Activated CD4-positive, alpha-beta memory T cell treated with anti-CD3 and anti-CD28 coated beads for 36 hours (primary cell): ENCODE measurements at regions of chr4 and their contacts with region 1.

Region 1: DNA sequence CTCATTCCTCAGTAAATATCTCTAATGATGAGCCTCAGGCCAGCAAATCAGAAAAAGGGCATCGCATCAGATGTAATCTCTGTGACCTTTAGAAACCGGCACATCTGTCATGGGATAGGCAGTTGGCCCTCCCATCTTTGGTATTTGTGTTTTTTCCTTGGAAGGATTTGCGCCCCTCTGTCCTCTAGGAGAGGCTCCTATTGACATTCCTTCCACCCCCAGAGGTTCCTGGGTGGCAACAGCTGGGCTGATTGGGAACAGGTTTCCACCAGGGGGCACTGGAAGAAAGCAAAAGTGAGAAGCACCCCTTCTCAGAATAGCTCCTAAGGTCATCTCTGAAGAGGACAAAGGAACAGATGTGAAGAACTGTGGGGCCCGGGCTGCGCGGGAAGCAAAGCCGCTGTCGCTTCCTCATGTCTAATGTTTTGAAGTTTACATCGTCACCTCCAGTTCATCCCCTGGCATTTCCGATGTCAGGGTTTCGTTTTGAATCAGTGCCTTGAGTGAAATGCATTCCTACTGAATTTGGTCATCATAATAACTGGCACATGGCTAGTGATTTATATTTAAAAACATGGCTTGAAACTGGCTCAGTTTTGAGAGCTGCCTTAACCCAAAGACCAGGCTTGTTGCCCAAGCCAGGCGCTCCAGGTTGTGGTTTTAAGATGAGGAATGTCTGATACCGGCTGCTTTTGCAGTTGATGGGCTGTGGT is 6.2 kb downstream of the TXK start:
- DNase-seq: peak; percentile 93
- H3K4me3 Mint-ChIP-seq: peak overlapping the region; percentile 63
- H3K27ac Mint-ChIP-seq: peak overlapping the region; percentile 95
- H3K4me1 Mint-ChIP-seq: peaks cover 89% of the 10 kb centered on the region
- H3K27me3 Mint-ChIP-seq: no peaks in the 10 kb centered on the region

Region 2: DNA sequence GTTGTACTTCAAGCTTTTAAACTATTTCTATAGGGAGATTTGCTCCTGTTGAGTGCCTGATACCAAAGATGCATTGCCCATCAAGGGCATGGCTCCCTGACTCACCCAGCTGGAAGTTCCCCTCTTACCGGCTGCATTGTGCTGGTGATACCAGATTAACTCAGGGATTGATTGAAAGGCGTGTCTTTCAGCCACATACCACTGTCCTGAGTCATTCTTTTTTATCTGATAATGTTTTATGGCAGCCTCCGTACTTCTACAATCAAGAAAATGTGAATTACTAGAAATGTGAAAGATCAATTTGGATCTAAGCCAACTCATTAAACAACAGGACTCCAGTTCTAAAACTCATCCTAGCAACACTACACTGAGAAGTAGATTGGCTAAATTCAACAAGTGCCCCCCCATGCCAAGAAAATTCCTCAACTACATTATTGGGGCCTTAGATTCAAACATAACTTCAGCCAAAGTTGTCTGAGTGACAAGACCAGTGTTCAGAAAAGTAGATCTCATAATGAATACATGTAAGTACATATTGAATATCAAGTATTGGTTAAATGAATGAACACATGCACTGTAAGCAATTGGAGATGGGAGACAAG is 33.8 kb before region 1 on chr4:
- CTCF ChIA-PET with region 1: interaction called, 6 read pairs
- POLR2A ChIA-PET with region 1: no interaction called
- intact Hi-C with region 1: loop called (anchors 5 kb)
- DNase-seq: peak; percentile 75
- H3K4me3 Mint-ChIP-seq: no peak overlapping the region
- H3K27ac Mint-ChIP-seq: peak overlapping the region; percentile 65
- H3K4me1 Mint-ChIP-seq: peaks cover 16% of the 10 kb centered on the region
- H3K27me3 Mint-ChIP-seq: no peaks in the 10 kb centered on the region

Region 3: DNA sequence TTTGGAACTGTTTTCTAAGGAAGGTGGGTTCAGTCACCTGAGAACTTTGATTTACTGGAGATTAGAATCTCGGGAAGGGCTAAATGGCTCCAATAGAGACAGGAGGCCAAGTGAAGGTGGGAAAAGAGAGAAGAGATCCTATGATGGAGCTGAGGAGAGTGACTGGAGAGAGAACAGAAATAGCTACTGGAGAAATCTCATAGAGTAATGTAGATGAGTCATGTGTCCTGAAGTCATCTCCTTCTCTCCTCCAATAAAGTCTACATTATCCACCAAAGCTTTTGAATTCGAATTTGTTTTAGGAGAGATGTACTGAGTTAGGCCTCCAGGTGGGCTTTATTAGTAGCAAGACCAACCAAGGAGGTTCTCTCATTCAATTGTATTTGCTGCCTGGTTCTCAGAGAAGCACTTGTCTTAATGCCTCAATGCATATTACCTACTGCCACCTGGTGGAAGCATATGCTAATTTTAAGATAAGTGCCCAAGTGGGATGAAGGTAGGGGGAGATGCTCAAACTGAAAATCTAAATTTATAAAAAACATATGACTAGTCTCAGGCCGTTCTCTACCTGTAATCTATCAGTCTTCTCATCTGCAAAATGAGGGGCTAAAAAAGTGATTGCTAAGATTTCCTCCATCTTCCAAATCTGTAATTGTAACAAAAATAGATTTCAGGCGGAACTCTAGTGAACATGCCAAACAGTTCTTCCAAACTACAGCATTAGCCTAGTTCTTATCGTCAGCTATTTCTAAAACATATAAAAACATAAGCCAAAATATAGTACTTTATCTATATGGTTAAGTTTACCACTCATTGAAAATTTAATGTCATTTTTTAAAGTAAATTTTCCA is 18.2 kb before region 1 on chr4:
- CTCF ChIA-PET with region 1: interaction called, 78 read pairs
- POLR2A ChIA-PET with region 1: interaction called, 5 read pairs
- intact Hi-C with region 1: loop called (anchors 1 kb)
- DNase-seq: no peak
- H3K4me3 Mint-ChIP-seq: no peak overlapping the region
- H3K27ac Mint-ChIP-seq: no peak overlapping the region
- H3K4me1 Mint-ChIP-seq: peaks cover 47% of the 10 kb centered on the region
- H3K27me3 Mint-ChIP-seq: no peaks in the 10 kb centered on the region

Region 4: GRCh38 chr4:48116582-48116981 is 11.3 kb before region 1 on chr4:
- CTCF ChIA-PET with region 1: interaction called, 78 read pairs
- POLR2A ChIA-PET with region 1: interaction called, 5 read pairs
- intact Hi-C with region 1: loop called (anchors 1 kb)
- DNase-seq: no peak
- H3K4me3 Mint-ChIP-seq: no peak overlapping the region
- H3K27ac Mint-ChIP-seq: no peak overlapping the region
- H3K4me1 Mint-ChIP-seq: peaks cover 67% of the 10 kb centered on the region
- H3K27me3 Mint-ChIP-seq: no peaks in the 10 kb centered on the region

Region 5: GRCh38 chr4:48167538-48168263 is 39.9 kb after region 1 on chr4:
- CTCF ChIA-PET with region 1: interaction called, 3 read pairs
- POLR2A ChIA-PET with region 1: no interaction called
- intact Hi-C with region 1: loop called (anchors 1 kb)
- DNase-seq: no peak
- H3K4me3 Mint-ChIP-seq: no peak overlapping the region
- H3K27ac Mint-ChIP-seq: no peak overlapping the region
- H3K4me1 Mint-ChIP-seq: peaks cover 12% of the 10 kb centered on the region
- H3K27me3 Mint-ChIP-seq: no peaks in the 10 kb centered on the region

Region 6: DNA sequence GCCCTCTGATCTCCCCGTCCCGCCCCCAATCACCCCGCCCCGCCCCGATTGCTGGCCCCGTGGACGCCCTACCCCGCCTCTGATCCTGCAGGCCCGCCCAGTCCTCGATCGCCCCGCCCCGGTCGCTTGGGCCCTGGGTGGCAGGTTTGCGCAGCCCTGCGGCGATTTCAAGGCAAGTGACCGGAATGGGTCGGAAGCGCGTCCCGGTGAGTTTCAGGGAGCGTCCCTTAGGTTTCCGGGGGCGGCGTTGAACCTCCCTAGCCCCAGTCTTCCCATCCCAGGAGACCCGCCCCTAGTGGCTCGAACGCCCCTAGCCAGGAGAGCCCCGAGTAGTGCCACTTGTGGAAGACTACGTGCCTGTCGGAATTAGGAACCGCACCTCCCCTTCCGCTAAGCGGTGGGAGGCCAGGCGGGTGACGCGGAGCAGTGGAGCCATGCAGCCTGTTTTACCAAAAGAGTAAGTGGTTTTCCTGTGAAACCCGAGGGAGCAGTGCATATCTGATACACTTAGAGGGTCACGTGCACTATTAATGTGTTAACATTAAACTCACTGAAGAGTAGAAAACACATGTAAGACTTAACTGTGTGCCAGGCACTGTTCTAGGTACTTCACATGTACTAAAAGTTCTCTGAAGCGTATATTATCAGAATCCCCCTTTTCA is 142.2 kb after region 1 on chr4:
- CTCF ChIA-PET with region 1: interaction called, 5 read pairs
- POLR2A ChIA-PET with region 1: no interaction called
- intact Hi-C with region 1: loop called (anchors 1 kb)
- DNase-seq: peak; percentile 95
- H3K4me3 Mint-ChIP-seq: peak overlapping the region; percentile 91
- H3K27ac Mint-ChIP-seq: peak overlapping the region; percentile 75
- H3K4me1 Mint-ChIP-seq: peaks cover 23% of the 10 kb centered on the region
- H3K27me3 Mint-ChIP-seq: no peaks in the 10 kb centered on the region